ENCODE measurements at regions of chr9 and their contacts with region 1.

Region 1: GRCh38 chr9:122092611-122093506 is at the start of gene TTLL11:
- DNase-seq: peak; percentile 99
- H3K4me3 ChIP-seq: peak within 1 kb of the TSS; percentile 70 to 93 (median 90)
- H3K27ac ChIP-seq: peak within 1 kb of the TSS; percentile 81 to 90 (median 87)
- H3K4me1 ChIP-seq: peaks cover 26 to 76% (median 62%) of the 10 kb centered on the region in 4 donors
- H3K27me3 ChIP-seq: no peaks in the 10 kb centered on the region
- CTCF ChIP-seq: peak in 1 of 3 experiments; percentile 31
- EP300 ChIP-seq: no peak
- POLR2A ChIP-seq: peak; percentile 30
- total RNA-seq, gene TTLL11: 20.5 to 41.3 (median 27.6) TPM

Region 2: DNA sequence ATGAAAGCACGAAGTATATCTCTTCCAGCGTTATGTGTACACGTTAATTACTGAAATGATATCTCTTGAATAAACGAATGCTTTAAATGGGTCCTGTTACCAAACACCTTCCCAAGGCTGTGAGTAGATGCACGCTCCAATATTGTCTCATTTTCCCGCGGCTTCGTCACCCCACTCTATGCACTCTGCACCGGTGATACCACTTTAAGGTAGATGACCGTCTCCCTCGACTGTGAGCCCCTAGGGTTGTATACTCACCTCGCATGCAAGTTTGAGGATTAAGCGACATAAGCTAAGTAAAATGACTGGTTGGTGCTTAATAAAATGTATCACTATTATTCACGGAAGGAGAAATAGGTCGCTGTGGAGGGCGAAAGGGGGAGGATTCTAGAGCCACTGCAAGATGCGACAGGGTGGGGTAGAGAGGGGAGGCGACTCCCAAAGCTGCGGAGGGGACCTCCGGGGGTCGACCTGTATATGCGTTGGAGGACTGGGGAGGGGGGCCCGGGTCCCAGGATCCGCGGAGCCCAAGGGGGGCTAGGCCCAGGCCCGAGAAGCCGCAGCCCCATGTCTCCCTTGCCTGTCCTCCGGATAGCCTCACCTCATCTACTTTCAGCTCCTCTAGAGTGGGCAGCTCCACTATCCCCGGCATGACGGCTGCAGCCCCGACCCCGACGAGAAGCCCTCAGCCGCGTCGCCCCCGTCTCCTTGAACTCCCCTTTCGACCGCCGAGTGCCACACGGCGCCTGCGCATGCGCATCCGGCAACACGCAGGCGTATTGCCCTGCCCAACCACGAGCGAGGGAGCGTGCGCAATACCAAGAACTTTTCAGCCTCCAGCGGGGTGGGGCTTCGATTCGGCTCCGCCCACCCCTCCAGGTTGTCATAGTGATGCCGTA is 66.4 kb after region 1 on chr9 and contains the starts of genes MORN5 and NDUFA8:
- intact Hi-C with region 1: loop called (anchors 2 kb)
- DNase-seq: peak; percentile 98
- H3K4me3 ChIP-seq: peak within 1 kb of the TSS; percentile 81 to 98 (median 95)
- H3K27ac ChIP-seq: peak within 1 kb of the TSS; percentile 90 to 93 (median 91)
- H3K4me1 ChIP-seq: peaks cover 31 to 61% (median 51%) of the 10 kb centered on the region in 4 donors
- H3K27me3 ChIP-seq: no peaks in the 10 kb centered on the region
- CTCF ChIP-seq: peak in 2 of 3 experiments; percentile 21 to 29
- EP300 ChIP-seq: no peak
- POLR2A ChIP-seq: peak; percentile 67
- total RNA-seq, gene MORN5: 3.9 to 5.8 TPM in 2 of 4 donors, not detected in the others
- total RNA-seq, gene NDUFA8: 55.7 to 83.3 (median 76.1) TPM

Region 3: GRCh38 chr9:122264360-122265148 is 171.7 kb after region 1 on chr9 and contains the starts of genes MRRF and RBM18:
- intact Hi-C with region 1: loop called (anchors 10 kb)
- DNase-seq: peak; percentile 98
- H3K4me3 ChIP-seq: peak within 1 kb of the TSS; percentile 68 to 87 (median 72)
- H3K27ac ChIP-seq: peak within 1 kb of the TSS; percentile 89 to 92 (median 90)
- H3K4me1 ChIP-seq: peaks cover 46 to 61% (median 51%) of the 10 kb centered on the region in 4 donors
- H3K27me3 ChIP-seq: no peaks in the 10 kb centered on the region
- CTCF ChIP-seq: no peak
- EP300 ChIP-seq: no peak
- POLR2A ChIP-seq: peak; percentile 63
- total RNA-seq, gene MRRF: 20.5 to 29.2 (median 28.5) TPM
- total RNA-seq, gene RBM18: 10.1 to 14.6 (median 13.3) TPM

Region 4: DNA sequence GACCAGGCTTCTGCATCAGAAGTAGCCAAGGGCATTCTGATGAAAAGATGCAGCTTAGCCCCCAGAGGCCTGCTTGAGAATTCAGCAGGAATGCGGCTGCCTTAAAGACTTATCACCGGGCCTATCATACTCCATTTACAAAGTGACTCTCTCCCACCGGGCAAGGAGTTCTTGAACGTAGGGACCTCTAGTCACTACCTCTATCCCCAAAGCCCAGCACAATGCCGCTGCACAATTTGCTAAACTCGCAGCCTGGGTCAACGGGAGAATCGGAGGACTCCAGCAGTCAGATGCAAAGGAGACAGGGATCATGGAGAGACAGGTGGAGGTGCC is 734.9 kb after region 1 on chr9:
- intact Hi-C with region 1: loop called (anchors 10 kb)
- DNase-seq: no peak
- H3K4me3 ChIP-seq: peak overlapping the region; percentile 78 to 100 (median 92)
- H3K27ac ChIP-seq: peak overlapping the region; percentile 93 to 99 (median 96)
- H3K4me1 ChIP-seq: peaks cover 22 to 52% (median 30%) of the 10 kb centered on the region in 4 donors
- H3K27me3 ChIP-seq: no peaks in the 10 kb centered on the region
- CTCF ChIP-seq: no peak
- EP300 ChIP-seq: no peak
- POLR2A ChIP-seq: no peak